ENCODE measurements at regions of chr2 and their contacts with region 1.

Region 1: GRCh38 chr2:45567974-45568789 is 42.9 kb downstream of the SRBD1 start:
- DNase-seq: peak; percentile 75
- H3K4me3 Mint-ChIP-seq: peak overlapping the region; percentile 73
- H3K27ac Mint-ChIP-seq: peak overlapping the region; percentile 91
- H3K4me1 Mint-ChIP-seq: peaks cover 19% of the 10 kb centered on the region
- H3K27me3 Mint-ChIP-seq: no peaks in the 10 kb centered on the region

Region 2: GRCh38 chr2:45494269-45494977 is 73.8 kb before region 1 on chr2:
- intact Hi-C with region 1: loop called (anchors 2 kb)
- DNase-seq: peak; percentile 70
- H3K4me3 Mint-ChIP-seq: no peak overlapping the region
- H3K27ac Mint-ChIP-seq: no peak overlapping the region
- H3K4me1 Mint-ChIP-seq: peaks cover 22% of the 10 kb centered on the region
- H3K27me3 Mint-ChIP-seq: no peaks in the 10 kb centered on the region

Region 3: DNA sequence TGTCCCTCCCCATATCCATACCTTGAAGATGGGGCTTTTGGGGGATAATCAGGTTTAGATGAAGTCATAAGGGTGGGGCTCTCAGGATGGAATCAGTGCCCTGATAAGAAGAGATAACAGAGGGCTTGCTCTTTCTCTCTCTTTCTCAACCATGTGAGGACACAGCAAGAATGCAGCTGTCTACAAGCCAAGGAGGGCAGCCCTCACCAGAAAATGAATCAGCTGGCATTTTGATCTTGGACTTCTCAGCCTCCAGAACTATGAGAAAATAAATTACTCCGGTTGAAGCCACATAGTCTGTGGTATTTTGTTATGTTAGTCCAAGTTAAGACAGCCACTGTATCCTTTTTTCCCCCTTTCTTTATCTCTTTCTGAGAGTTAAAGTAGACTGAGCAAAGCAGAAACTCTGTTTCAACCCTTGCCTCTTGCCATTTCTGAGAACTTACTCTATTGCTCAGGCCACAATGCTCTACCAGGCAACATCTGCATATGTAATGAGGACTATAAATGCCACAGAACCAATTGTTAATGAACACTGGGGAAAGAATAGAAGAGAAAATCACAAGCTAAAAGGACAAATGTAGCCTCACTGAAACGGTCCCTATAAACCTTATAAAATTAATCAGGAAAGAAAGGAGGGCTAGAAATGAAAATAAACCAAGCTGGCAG is 14.0 kb before region 1 on chr2:
- intact Hi-C with region 1: loop called (anchors 1 kb)
- DNase-seq: no peak
- H3K4me3 Mint-ChIP-seq: peak overlapping the region; percentile 27
- H3K27ac Mint-ChIP-seq: peak overlapping the region; percentile 88
- H3K4me1 Mint-ChIP-seq: peaks cover 25% of the 10 kb centered on the region
- H3K27me3 Mint-ChIP-seq: no peaks in the 10 kb centered on the region

Region 4: DNA sequence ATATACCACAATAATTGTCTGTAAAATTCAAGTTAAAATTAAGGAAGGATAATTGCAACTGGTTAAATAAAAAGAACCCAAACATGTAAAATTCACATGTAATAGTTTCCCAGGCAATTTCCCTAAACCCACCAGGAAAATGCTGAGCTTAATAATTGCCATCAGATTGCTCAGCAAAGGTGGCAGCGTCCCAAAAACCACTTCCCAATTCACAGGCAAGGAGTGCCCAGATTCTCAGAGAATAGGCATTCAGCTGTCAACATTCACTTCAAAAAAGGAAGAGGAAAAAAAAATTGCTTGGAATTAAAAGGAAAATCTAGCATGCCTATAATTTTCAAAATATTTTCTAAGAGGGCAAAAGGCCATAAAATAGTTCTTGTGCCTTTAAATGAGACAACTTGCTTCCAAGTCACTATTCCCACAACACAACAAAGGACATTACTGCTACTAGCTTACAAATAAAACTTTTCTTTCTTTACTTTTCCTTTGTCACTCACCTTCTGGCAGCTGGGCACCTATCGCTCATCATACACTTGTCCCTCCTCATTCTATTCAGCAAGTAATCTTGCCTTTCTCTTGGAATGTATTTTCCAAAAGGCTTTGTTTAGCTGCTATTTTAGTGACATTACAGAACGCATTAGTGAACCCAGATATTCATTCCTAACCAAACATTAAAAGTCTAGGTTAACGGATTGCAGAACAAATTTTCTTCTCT is 27.7 kb after region 1 on chr2:
- intact Hi-C with region 1: no loop called
- DNase-seq: no peak
- H3K4me3 Mint-ChIP-seq: no peak overlapping the region
- H3K27ac Mint-ChIP-seq: no peak overlapping the region
- H3K4me1 Mint-ChIP-seq: peaks cover 5% of the 10 kb centered on the region
- H3K27me3 Mint-ChIP-seq: no peaks in the 10 kb centered on the region

Region 5: GRCh38 chr2:45611020-45611737 is 43.0 kb after region 1 on chr2 and contains the start of gene SRBD1:
- intact Hi-C with region 1: loop called (anchors 1 kb)
- DNase-seq: peak; percentile 97
- H3K4me3 Mint-ChIP-seq: peak within 1 kb of the TSS; percentile 97
- H3K27ac Mint-ChIP-seq: peak within 1 kb of the TSS; percentile 95
- H3K4me1 Mint-ChIP-seq: peaks cover 16% of the 10 kb centered on the region
- H3K27me3 Mint-ChIP-seq: no peaks in the 10 kb centered on the region
- total RNA-seq, gene SRBD1: 14.5 and 18.9 TPM in 2 replicates

Region 6: GRCh38 chr2:45643543-45644542 is 75.7 kb after region 1 on chr2:
- intact Hi-C with region 1: loop called (anchors 2 kb)
- DNase-seq: peak; percentile 93
- H3K4me3 Mint-ChIP-seq: peak overlapping the region; percentile 76
- H3K27ac Mint-ChIP-seq: no peak overlapping the region
- H3K4me1 Mint-ChIP-seq: peaks cover 12% of the 10 kb centered on the region
- H3K27me3 Mint-ChIP-seq: peaks cover 36% of the 10 kb centered on the region

Region 7: GRCh38 chr2:45650851-45651414 is 82.8 kb after region 1 on chr2:
- intact Hi-C with region 1: loop called (anchors 1 kb)
- DNase-seq: peak; percentile 98
- H3K4me3 Mint-ChIP-seq: peak overlapping the region; percentile 100
- H3K27ac Mint-ChIP-seq: peak overlapping the region; percentile 100
- H3K4me1 Mint-ChIP-seq: peaks cover 28% of the 10 kb centered on the region
- H3K27me3 Mint-ChIP-seq: peaks cover 15% of the 10 kb centered on the region